ENCODE measurements at regions of chr2 and their contacts with region 1.

Region 1: DNA sequence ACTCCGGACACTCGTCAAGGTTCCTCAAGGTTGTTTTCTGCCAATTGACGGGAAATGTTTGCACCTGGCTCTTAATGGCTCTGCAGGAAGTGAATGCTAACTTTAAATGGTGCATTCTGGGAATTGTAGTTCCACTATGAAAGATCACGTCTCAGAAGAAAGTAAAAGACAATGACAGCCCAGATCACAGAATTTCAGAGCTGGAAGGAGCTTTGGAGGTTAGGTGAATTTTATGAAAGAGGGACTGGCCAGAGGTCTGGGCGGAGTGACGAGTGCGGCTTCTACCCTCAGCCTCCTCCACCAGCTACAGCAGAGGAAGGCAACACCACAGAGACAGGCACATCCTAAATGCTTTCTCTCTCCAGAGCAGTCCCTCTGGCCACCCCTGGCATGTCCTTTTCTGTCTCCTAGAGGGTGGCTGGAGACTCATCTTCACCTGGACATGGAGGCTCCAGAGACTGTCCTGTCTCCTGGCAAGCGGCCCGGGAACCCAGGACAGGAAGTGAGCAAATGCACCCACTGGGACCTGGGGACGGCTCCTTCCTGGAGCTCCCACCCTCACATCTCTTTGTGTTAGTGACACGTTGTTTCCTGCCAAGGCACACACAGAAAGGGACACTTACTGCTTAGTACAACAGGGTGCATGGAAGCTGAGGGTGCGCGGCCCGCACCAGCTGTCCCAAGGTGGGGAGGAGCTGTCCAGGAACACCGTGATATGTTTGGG is 19.4 kb downstream of the THAP4 start:
- DNase-seq: peak; percentile 61
- H3K4me3 Mint-ChIP-seq: peak overlapping the region; percentile 75
- H3K27ac Mint-ChIP-seq: peak overlapping the region; percentile 90
- H3K4me1 Mint-ChIP-seq: peaks cover 47% of the 10 kb centered on the region
- H3K27me3 Mint-ChIP-seq: no peaks in the 10 kb centered on the region

Region 2: DNA sequence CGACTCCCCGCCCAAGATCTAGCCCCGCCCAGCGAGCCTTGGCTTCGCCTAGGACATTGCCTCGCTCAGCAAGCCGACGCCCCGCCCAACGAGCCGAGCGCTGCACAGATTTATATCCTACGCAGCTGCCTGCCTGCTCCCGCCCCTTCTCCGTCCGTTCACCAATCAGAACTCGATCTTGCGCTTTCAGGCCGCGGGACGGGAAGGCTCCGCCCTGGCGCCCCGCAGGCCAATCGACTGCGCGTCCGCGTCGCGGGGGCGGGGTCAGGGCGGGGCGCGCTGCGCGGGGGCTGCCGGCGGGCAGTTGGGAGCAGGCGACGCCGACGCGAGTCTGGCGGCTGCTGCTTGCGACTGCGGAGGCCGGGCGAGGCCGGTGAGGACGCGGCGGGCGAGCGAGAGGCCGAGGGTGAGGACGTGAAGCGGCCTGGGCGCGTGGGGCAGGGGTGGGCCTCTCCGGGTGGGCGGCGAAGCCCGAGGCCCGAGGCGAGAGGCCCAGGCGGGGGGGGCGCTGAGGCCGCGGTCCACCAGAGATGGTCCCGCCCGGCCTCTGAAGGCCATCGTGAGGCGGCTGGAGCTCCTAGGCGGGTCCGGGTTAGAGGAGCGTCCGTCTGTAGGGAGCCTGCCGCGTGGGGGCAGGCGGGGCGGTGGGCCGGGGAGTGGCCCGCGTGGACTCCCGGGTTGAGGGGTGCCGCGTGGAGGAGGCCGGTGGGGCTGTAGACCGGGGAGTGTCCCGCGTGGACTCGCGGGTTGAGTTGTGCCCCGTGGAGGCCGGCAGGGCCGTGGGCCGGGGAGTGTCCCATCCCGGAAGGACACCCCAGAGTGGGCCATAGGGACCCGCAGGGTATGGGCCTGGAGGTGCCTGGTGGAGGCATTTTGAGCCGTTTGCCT is 261.4 kb before region 1 on chr2 and contains the start of gene FARP2:
- CTCF ChIA-PET with region 1: no interaction called
- intact Hi-C with region 1: loop called (anchors 1 kb)
- DNase-seq: peak; percentile 99
- H3K4me3 Mint-ChIP-seq: peak within 1 kb of the TSS; percentile 78
- H3K27ac Mint-ChIP-seq: peak within 1 kb of the TSS; percentile 76
- H3K4me1 Mint-ChIP-seq: peaks cover 27% of the 10 kb centered on the region
- H3K27me3 Mint-ChIP-seq: no peaks in the 10 kb centered on the region
- total RNA-seq, gene FARP2: 19.5 to 19.6 TPM

Region 3: GRCh38 chr2:241399941-241400919 is 217.4 kb before region 1 on chr2:
- CTCF ChIA-PET with region 1: no interaction called
- intact Hi-C with region 1: no loop called
- DNase-seq: no peak
- H3K4me3 Mint-ChIP-seq: no peak overlapping the region
- H3K27ac Mint-ChIP-seq: no peak overlapping the region
- H3K4me1 Mint-ChIP-seq: no peaks in the 10 kb centered on the region
- H3K27me3 Mint-ChIP-seq: no peaks in the 10 kb centered on the region

Region 4: DNA sequence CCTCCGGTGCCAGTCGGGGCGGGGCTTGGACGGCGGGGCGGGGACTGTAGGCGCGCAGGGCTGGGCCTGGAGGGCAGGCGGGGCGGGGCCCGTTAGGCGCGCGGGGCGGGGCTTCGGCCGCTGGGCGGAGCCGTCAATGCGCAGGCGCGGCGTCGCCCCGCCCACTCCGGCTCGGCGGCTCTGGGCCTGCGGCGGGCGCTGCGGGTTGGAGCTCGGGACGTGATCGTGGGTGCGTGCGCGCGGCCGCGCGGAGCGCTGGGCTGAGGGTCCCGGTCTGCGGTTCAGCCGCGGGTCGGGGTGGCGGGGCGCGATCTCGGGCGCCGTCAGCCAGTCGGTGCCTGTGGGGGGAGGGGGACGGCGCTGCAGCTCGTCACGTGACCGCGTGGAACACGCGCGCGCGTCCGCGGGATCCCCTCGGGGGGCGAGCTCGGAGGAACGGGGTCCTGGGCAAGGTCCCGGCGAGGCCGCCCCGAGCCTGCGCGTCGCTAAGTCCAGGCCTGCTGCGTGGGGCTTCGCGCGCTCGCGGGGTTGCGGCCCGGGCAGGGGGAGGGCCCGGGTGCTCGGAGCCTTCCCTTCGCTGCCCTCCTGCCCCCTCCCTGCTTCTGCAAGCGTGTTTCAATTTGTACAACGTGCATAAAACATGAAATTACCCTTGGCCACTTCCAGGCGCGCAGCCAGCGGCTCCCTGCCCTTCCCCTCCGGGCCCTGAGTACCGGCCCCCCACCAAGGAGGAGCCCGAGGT is 117.0 kb after region 1 on chr2 and contains the start of gene D2HGDH:
- CTCF ChIA-PET with region 1: no interaction called
- intact Hi-C with region 1: loop called (anchors 2 kb)
- DNase-seq: peak; percentile 95
- H3K4me3 Mint-ChIP-seq: peak within 1 kb of the TSS; percentile 78
- H3K27ac Mint-ChIP-seq: no peak within 1 kb of the TSS
- H3K4me1 Mint-ChIP-seq: peaks cover 52% of the 10 kb centered on the region
- H3K27me3 Mint-ChIP-seq: no peaks in the 10 kb centered on the region
- total RNA-seq, gene D2HGDH: 19.4 to 23.1 TPM

Measured in activated naive CD4-positive, alpha-beta T cell treated with anti-CD3 and anti-CD28 coated beads for 36 hours (primary cell).